ENCODE measurements at regions of chr10 and their contacts with region 1.

Region 1: DNA sequence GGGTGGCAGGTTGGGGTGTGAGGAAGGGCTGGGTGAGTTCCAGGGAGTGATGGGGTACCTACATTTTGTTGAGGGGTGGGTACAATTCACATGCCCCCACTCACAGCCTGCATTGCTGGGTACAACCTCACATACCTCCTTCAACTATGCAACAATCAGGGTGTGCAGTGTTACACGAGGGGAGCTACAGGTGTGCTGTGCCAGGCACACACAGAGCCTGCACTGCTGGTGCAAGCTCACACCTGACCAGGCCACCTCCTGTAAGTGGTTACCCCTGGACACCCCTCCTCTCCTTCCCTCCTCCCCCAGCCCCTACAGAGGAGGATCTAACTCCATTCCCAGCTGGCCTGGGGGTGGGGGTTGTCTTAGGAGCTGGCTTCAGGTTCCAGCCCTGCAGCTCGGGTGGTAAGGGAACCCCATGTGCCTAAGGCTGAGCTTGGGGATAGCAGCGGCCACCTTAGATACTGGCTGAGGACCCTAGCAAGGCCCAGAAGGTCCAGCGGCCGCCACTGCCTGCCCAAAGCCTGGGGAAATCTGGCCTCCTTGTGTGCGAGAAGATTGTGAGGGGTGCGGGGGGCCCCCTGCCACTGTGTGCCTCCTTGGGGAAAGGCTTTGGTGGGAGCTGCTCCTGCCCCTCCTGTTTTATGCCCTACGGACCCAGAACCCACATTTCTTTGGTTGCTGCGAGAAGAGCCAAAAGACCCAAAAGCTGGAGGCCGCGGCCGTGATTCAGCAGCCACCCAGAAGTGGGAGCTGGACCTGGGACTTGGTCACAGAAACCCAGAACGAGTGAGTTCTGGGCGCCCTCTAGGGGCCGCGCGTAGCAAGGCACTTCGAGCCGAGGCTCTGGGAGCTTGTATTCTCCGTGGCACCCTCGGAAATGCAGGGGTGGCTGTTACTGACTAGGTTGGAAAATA is 10.8 kb downstream of the TLX1 start:
- DNase-seq: peak; percentile 52 to 88 (median 71)
- ATAC-seq: peak; percentile 81 to 90 (median 85)
- H3K4me3 ChIP-seq: no peak overlapping the region
- H3K4me3 Mint-ChIP-seq: no peak overlapping the region
- H3K27ac ChIP-seq: no peak overlapping the region
- H3K27ac Mint-ChIP-seq: no peak overlapping the region
- H3K4me1 ChIP-seq: peaks cover 0 to 39% of the 10 kb centered on the region in 2 experiments
- H3K4me1 Mint-ChIP-seq: peaks cover 29 to 32% (median 31%) of the 10 kb centered on the region in 3 donors
- H3K27me3 ChIP-seq: peaks cover 21 to 93% of the 10 kb centered on the region in 2 experiments
- H3K27me3 Mint-ChIP-seq: peaks cover 56 to 90% of the 10 kb centered on the region in 2 donors

Region 2: DNA sequence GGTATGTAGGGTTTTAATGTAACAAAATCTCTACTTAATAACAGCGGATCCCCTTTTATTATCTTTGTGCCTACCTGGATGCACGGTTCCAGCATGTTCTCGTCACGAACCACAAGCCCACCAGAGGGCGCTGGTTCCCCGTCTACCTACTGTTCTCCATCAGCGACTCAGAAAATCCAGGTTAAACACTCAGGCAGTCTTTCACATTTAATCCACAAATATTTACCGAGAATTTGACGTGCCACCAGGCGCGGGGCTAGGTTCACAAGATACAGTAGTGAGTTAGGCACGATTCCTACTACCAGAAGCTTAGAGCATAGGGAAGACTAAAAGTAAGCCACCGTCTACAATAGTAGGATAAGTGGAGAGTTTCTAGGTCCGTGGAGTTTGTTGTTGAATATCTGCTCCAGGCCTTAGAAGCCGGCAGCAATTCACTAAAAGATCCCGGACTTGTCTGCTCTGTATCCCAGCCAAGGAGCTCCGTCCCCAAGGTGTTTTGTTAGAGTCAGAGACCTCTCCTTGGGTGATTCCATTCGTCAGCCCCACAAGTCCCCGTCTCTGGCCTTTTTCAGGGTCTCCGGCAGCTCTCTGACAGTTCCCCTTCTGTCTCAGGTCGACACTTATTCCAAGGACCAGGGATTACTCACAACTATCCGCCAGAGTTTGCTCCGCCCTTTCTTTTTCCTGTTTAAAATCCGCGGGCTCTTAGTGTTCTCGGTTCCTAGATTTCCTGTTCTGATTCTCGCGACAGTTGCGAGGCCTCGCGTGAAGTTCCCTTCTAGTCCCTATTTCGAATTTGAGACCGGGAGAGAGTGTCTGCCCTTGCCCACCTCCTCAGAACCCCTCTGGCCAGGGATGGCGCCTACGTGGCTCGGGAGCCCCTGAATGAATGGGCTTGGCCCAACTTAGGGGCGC is 81.6 kb before region 1 on chr10:
- CTCF ChIA-PET with region 1: interaction called, 3 to 10 read pairs
- POLR2A ChIA-PET with region 1: no interaction called
- DNase-seq: peak; percentile 67 to 94 (median 86)
- ATAC-seq: peak; percentile 75 to 81 (median 76)
- H3K4me3 ChIP-seq: peak overlapping the region; percentile 99 to 100
- H3K4me3 Mint-ChIP-seq: peak overlapping the region; percentile 86 to 93 (median 87)
- H3K27ac ChIP-seq: peak overlapping the region; percentile 90
- H3K27ac Mint-ChIP-seq: peak overlapping the region; percentile 91 to 98
- H3K4me1 ChIP-seq: peaks cover 11 to 34% of the 10 kb centered on the region in 2 experiments
- H3K4me1 Mint-ChIP-seq: peaks cover 22 to 35% (median 23%) of the 10 kb centered on the region in 3 donors
- H3K27me3 ChIP-seq: peaks cover 6 to 32% of the 10 kb centered on the region in 2 experiments
- H3K27me3 Mint-ChIP-seq: peaks cover 17 to 19% of the 10 kb centered on the region in 2 donors

Region 3: DNA sequence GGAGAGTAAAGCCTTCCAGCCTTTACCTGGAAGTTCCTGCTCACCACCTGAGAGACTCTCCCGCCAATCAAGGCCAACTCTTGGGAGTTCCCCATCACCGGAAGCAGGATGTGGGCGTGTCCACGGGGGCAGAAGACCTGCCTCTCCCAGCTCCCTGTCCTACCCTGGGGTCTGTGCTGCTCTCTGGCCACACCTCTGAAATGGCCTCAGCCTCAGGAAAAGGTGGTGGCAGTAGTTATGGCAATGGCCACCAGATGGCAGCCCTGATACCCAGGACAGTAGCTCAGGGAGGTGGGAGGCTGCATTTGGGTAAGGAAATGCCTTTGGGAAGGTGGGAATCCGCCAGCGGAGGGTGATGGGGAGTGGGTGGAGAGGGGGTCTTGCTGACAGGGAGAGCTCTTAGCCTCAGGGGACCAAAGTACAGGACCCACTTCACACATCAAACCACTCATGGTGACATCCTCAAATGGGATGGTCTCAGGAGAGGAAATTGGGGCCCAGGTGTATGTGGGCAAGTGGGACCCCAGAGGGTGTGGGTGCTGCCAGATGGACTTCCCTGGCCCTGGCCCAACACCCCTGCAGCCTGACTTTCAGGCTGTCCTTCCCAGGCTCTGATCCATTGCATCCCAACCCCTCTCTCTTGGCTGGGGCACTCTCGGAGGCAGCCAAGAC is 46.2 kb before region 1 on chr10:
- CTCF ChIA-PET with region 1: interaction called, 76 to 93 read pairs
- POLR2A ChIA-PET with region 1: no interaction called
- DNase-seq: peak; percentile 21 to 81 (median 60)
- ATAC-seq: peak; percentile 80 to 98 (median 81)
- H3K4me3 ChIP-seq: no peak overlapping the region
- H3K4me3 Mint-ChIP-seq: no peak overlapping the region
- H3K27ac ChIP-seq: no peak overlapping the region
- H3K27ac Mint-ChIP-seq: no peak overlapping the region
- H3K4me1 ChIP-seq: peaks cover 0 to 6% of the 10 kb centered on the region in 2 experiments
- H3K4me1 Mint-ChIP-seq: peaks cover 0 to 3% (median 0%) of the 10 kb centered on the region in 3 donors
- H3K27me3 ChIP-seq: peaks cover 2 to 86% of the 10 kb centered on the region in 2 experiments
- H3K27me3 Mint-ChIP-seq: peaks cover 54 to 72% of the 10 kb centered on the region in 2 donors

Region 4: GRCh38 chr10:101101372-101101881 is 40.4 kb before region 1 on chr10:
- CTCF ChIA-PET with region 1: interaction called, 76 to 93 read pairs
- POLR2A ChIA-PET with region 1: interaction called in 1 of 2 experiments, 4 read pairs
- DNase-seq: no peak
- ATAC-seq: no peak
- H3K4me3 ChIP-seq: no peak overlapping the region
- H3K4me3 Mint-ChIP-seq: no peak overlapping the region
- H3K27ac ChIP-seq: no peak overlapping the region
- H3K27ac Mint-ChIP-seq: no peak overlapping the region
- H3K4me1 ChIP-seq: no peaks in the 10 kb centered on the region
- H3K4me1 Mint-ChIP-seq: no peaks in the 10 kb centered on the region
- H3K27me3 ChIP-seq: peaks cover 0 to 69% of the 10 kb centered on the region in 2 experiments
- H3K27me3 Mint-ChIP-seq: peaks cover 46 to 67% of the 10 kb centered on the region in 2 donors

Region 5: GRCh38 chr10:101152316-101152715 is 10.4 kb after region 1 on chr10:
- CTCF ChIA-PET with region 1: interaction called, 4 to 10 read pairs
- POLR2A ChIA-PET with region 1: no interaction called
- DNase-seq: no peak
- ATAC-seq: no peak
- H3K4me3 ChIP-seq: no peak overlapping the region
- H3K4me3 Mint-ChIP-seq: no peak overlapping the region
- H3K27ac ChIP-seq: no peak overlapping the region
- H3K27ac Mint-ChIP-seq: no peak overlapping the region
- H3K4me1 ChIP-seq: no peaks in the 10 kb centered on the region
- H3K4me1 Mint-ChIP-seq: no peaks in the 10 kb centered on the region
- H3K27me3 ChIP-seq: peaks cover 17 to 44% of the 10 kb centered on the region in 2 experiments
- H3K27me3 Mint-ChIP-seq: peaks cover 63 to 75% of the 10 kb centered on the region in 2 donors

Measured in T-cell (primary cell).